Activated naive CD4-positive, alpha-beta T cell treated with anti-CD3 and anti-CD28 coated beads for 36 hours (primary cell): ENCODE measurements at regions of chrX and their contacts with region 1.

Region 1: DNA sequence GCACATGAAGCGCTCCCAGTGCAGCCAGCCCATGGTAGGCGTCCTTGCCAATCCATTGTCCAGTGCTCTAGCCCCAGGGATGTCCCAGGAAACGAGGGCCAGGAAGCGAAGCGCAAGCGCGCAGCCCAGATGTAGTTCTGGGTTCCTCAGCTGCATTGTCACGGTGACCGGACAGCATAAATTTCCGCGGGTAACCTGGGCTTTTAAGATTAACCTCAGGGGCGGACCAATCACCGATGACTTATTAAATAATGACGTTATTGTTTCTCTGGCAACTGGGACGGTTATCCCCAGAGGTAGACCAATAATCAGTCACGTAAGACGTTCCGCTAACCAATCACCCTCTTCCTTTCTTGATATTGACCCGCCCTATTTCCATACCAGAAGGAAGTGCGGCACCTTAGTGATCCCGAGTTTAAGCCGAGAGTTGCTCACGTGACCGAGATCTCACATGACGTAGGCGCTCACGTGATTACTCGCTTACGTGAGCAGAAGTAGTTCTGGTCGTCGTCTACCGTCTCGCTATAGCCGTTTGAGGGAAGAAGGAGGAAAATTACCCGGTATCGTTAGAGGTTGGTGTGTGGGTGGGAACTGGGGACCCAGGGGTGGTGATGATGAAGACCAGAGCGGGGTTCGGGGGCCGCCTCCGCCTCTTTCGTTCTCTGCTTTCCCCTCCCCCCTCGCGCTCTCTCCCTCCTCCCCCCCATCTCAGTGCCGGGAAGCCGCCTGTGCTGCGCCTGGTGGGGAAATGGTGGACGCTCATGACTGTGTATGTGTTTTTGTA is at the starts of genes GLA and HNRNPH2:
- DNase-seq: peak; percentile 94
- H3K4me3 Mint-ChIP-seq: peak within 1 kb of the TSS; percentile 99
- H3K27ac Mint-ChIP-seq: peak within 1 kb of the TSS; percentile 95
- H3K4me1 Mint-ChIP-seq: peaks cover 28% of the 10 kb centered on the region
- H3K27me3 Mint-ChIP-seq: no peaks in the 10 kb centered on the region
- total RNA-seq, gene GLA: 40.7 to 45.8 TPM
- total RNA-seq, gene HNRNPH2: 31.5 to 31.9 TPM

Region 2: GRCh38 chrX:100819837-100820666 is 587.9 kb before region 1 on chrX and contains the start of gene CSTF2:
- CTCF ChIA-PET with region 1: no interaction called
- intact Hi-C with region 1: loop called (anchors 1 kb)
- DNase-seq: peak; percentile 84
- H3K4me3 Mint-ChIP-seq: peak within 1 kb of the TSS; percentile 90
- H3K27ac Mint-ChIP-seq: peak within 1 kb of the TSS; percentile 95
- H3K4me1 Mint-ChIP-seq: peaks cover 11% of the 10 kb centered on the region
- H3K27me3 Mint-ChIP-seq: no peaks in the 10 kb centered on the region
- total RNA-seq, gene CSTF2: 44.3 to 46.8 TPM

Region 3: GRCh38 chrX:100928660-100929613 is 479.0 kb before region 1 on chrX and contains the start of gene XKRX:
- CTCF ChIA-PET with region 1: no interaction called
- intact Hi-C with region 1: loop called (anchors 10 kb)
- DNase-seq: peak; percentile 74
- H3K4me3 Mint-ChIP-seq: peak within 1 kb of the TSS; percentile 82
- H3K27ac Mint-ChIP-seq: no peak within 1 kb of the TSS
- H3K4me1 Mint-ChIP-seq: peaks cover 52% of the 10 kb centered on the region
- H3K27me3 Mint-ChIP-seq: no peaks in the 10 kb centered on the region
- total RNA-seq, gene XKRX: 0.64 to 0.72 TPM

Region 4: DNA sequence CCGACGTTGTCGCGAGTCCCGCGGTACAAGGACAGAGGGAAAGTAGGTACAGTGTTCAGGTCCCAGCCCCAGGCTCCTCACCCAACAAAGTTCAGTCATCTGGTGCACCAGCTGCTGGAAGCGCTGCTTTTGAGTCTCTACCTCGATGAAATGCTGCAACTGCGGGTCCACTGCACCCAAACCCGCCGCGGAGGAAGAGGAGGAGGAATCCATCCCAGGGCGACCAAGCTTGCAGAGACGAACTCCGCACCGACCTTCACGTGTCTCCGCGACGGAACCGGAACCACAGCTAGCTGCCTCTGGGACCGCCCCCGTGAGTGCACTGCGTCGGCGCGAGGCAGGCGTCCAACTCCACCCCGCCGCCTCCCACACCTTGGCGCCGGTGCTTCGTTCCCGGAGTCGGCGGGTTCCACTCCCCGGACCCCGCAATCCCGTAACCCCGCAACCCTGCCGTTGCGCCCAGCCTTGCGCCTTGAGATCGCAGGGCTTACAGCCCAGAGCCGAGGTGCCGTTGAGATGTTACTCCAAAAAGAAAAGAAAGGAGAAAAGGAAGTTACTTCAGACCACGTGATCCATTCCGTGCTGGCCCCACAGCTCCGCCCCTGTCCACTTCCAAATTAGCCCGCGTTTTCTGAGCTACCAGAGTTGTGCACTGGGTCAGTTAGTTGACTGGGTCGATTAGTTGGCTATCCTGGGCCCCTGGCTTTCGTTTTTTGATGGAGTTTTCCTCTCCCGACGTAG is 59.3 kb before region 1 on chrX and contains the start of gene TIMM8A:
- CTCF ChIA-PET with region 1: no interaction called
- intact Hi-C with region 1: loop called (anchors 1 kb)
- DNase-seq: peak; percentile 82
- H3K4me3 Mint-ChIP-seq: peak within 1 kb of the TSS; percentile 84
- H3K27ac Mint-ChIP-seq: peak within 1 kb of the TSS; percentile 93
- H3K4me1 Mint-ChIP-seq: peaks cover 16% of the 10 kb centered on the region
- H3K27me3 Mint-ChIP-seq: no peaks in the 10 kb centered on the region
- total RNA-seq, gene TIMM8A: 14.9 to 15.9 TPM

Region 5: DNA sequence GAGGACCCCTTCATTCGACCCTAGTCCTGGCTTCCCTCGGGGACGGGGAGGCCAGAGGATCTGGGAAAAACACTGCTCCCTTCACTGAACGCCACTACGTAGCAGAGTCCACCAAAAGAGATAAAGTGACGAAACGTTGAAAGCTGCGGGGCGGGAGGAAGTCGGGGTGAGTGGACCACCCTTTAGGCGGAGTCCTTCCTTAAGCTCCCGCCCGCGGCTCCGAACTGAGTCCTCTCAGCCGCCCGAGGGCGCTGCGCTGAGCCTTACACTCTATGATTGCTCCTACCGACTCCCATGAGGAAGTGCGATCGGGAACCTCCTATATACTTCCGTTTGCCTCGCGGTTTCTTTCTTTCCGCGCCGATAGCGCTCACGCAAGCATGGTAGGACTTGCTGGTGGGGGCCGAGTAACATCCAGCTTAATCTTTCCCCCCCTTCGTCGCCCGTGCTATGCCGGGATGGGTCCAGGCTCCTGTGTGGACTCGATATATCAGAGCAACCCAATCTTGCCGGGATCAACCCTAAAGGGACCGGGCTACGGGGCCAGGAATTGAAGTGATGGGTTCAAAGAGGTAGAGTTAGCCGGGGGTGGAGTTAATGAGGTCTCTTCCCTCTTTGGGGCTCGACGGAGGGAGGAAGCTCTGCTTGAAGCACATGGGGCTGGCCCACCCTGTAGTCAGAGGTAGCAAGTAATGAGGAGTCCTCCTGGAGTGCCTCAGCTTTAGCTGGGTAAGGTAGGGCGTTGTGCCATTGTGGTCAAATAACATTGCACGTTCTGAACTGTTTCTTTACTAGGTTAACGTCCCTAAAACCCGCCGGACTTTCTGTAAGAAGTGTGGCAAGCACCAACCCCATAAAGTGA is 17.0 kb before region 1 on chrX and contains the start of gene RPL36A:
- CTCF ChIA-PET with region 1: interaction called, 8 read pairs
- intact Hi-C with region 1: loop called (anchors 1 kb)
- DNase-seq: peak; percentile 88
- H3K4me3 Mint-ChIP-seq: peak within 1 kb of the TSS; percentile 93
- H3K27ac Mint-ChIP-seq: peak within 1 kb of the TSS; percentile 94
- H3K4me1 Mint-ChIP-seq: peaks cover 18% of the 10 kb centered on the region
- H3K27me3 Mint-ChIP-seq: no peaks in the 10 kb centered on the region
- total RNA-seq, gene RPL36A: 446 to 500 TPM

Region 6: GRCh38 chrX:101658661-101659491 is 250.9 kb after region 1 on chrX:
- CTCF ChIA-PET with region 1: no interaction called
- intact Hi-C with region 1: loop called (anchors 2 kb)
- DNase-seq: peak; percentile 77
- H3K4me3 Mint-ChIP-seq: peak overlapping the region; percentile 76
- H3K27ac Mint-ChIP-seq: peak overlapping the region; percentile 8
- H3K4me1 Mint-ChIP-seq: peaks cover 28% of the 10 kb centered on the region
- H3K27me3 Mint-ChIP-seq: no peaks in the 10 kb centered on the region

Region 7: DNA sequence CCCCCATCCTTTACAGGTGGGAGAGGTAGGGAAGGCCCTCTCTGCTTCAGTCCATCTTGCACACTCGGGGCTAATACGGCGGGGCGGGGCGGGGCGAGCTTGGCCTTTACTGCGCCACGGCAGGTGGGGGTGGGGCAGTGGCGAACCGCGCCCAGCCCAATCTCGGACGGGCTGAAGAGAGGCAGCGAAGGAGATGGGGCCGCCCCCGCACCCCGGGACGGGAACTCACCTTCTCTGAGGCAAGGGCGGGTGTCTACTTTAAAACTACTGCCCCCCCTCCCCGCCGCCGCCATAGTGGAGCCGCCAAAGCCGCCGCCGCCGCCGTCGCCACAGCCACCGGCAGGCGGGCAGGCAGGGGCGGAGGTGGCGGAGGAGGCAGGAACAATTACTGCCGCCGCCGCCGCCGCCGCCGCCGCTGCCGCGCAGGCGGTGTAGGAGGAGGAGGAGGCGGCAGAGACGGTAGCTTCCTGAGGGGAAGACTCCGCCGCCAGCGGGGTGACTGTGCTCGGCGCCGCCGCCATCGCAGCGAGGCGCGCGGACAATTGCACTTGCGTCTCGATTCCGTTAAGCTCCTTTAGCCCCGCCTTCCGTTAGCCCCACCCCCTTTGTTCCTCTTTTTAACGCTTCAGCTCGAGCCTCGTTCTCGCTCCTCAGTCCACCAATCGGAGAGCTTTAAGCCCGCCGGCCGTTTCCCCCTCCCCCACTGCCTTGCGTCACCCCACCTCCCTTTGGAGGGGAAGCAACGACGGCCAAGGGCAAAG is 523.7 kb after region 1 on chrX and contains the start of gene ZMAT1:
- CTCF ChIA-PET with region 1: no interaction called
- intact Hi-C with region 1: loop called (anchors 1 kb)
- DNase-seq: peak; percentile 96
- H3K4me3 Mint-ChIP-seq: peak within 1 kb of the TSS; percentile 92
- H3K27ac Mint-ChIP-seq: peak within 1 kb of the TSS; percentile 91
- H3K4me1 Mint-ChIP-seq: peaks cover 11% of the 10 kb centered on the region
- H3K27me3 Mint-ChIP-seq: no peaks in the 10 kb centered on the region
- total RNA-seq, gene ZMAT1: 2.7 to 2.8 TPM